Left cardiac atrium (tissue), 4 donors: ENCODE measurements at regions of chr22 and their contacts with region 1.

Region 1: DNA sequence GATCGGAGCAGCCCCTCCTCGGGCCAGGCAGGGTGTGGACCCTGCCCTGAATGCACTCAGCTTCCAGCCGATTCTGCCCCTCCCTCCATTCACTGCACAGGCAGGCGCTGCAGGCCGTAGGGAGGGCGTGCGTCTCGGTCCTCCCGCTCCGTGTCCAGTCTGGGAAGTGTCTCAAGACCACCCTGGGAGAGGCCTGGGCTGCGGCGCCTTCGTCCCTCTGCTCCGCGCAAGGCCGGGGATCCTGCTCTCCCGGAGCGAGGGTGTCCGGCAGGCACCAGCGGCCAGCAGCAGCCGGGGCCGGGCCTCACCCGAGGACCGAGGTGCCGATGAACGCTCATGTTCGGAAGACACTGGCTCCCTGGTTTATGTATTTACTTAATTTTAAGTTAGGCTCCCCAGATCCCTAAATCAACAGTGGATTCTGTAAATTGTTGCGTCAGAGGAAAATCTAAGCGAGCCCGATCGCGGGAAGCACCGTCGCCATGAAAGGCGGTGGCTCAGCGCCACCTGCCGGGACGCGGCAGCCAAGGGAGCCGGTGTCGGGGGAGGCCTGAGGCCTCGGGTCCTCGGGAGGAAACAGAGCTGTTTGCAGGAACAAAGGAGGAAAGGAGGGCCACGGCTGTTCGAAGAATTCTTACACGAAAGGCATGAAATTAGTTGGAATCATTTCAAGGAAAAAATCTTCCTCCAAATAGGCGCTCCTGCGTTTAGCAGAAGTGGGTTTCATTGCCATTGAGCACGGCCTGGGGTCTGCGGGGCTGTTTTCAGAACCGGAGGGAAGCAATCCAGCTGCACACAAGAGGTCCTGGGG is 195.3 kb downstream of the BRD1 start:
- DNase-seq: peak; percentile 65
- ATAC-seq: peak; percentile 76 to 82

Region 2: GRCh38 chr22:48574776-48575565 is 1057.4 kb before region 1 on chr22:
- intact Hi-C with region 1: loop called in 1 of 2 experiments (anchors 10 kb)
- DNase-seq: peak; percentile 44
- ATAC-seq: peak in 1 of 2 donors; percentile 78

Region 3: DNA sequence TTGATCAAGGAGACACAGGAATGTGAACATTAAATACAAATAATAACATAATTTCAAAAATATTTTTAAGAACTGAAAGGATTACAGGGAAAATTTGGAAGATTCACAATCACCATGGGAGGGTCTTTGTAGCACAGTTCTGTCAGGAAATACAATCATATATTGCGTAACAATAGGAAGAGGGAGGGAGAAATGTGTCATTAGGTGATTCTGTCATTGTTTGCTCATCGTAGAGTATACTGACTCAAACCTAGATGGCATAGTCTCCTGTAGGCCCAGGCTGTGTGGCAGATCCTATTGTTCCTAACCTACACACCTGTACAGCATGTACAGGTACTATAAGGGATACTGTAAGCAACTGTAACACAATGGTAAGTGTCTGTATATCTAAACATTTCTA is 135.1 kb before region 1 on chr22:
- intact Hi-C with region 1: no loop called
- DNase-seq: no peak
- ATAC-seq: no peak